ENCODE measurements at regions of chr13 and their contacts with region 1.

Region 1: DNA sequence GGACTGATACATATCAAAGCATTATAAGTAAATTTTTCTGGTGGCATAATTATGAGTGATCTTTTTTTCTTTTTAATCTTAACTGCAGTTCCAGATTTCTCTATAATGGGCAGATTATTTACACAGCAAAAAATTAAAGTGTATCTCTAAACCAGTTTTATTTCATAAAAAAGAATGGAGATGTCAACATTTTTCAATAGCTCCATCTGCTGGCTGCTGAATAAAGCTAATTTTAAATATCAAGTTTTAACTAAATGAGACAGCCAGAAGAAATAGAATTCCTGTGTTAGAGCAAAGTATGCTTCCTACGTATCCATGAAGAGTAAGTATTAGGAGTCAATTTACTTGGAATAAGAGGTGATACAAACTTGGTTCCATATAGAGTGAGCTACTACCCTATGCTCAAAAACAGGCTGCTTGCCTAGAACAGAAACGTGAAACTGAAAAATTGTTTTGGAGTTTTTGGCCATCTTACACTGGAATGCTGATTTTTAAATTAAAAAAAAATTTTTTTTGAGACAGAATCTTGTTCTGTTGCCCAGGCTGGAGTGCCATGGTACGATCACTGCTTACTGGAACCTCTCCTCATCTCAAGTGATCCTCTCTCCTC is 5.0 kb upstream of the PDS5B start:
- DNase-seq: no peak
- ATAC-seq: no peak
- H3K4me3 Mint-ChIP-seq: no peak overlapping the region
- H3K27ac Mint-ChIP-seq: no peak overlapping the region
- H3K4me1 Mint-ChIP-seq: peaks cover 9% of the 10 kb centered on the region
- H3K27me3 Mint-ChIP-seq: no peaks in the 10 kb centered on the region
- CTCF ChIP-seq: no peak

Region 2: GRCh38 chr13:32019612-32020233 is 561.6 kb before region 1 on chr13:
- CTCF ChIA-PET with region 1: no interaction called
- POLR2A ChIA-PET with region 1: no interaction called
- intact Hi-C with region 1: loop called (anchors 1 kb)
- DNase-seq: no peak
- ATAC-seq: peak; percentile 85
- H3K4me3 Mint-ChIP-seq: no peak overlapping the region
- H3K27ac Mint-ChIP-seq: no peak overlapping the region
- H3K4me1 Mint-ChIP-seq: no peaks in the 10 kb centered on the region
- H3K27me3 Mint-ChIP-seq: no peaks in the 10 kb centered on the region
- CTCF ChIP-seq: no peak

Region 3: GRCh38 chr13:32267836-32268439 is 313.3 kb before region 1 on chr13:
- CTCF ChIA-PET with region 1: interaction called, 3 read pairs
- POLR2A ChIA-PET with region 1: no interaction called
- intact Hi-C with region 1: loop called (anchors 1 kb)
- DNase-seq: peak; percentile 22
- ATAC-seq: peak; percentile 93
- H3K4me3 Mint-ChIP-seq: no peak overlapping the region
- H3K27ac Mint-ChIP-seq: no peak overlapping the region
- H3K4me1 Mint-ChIP-seq: no peaks in the 10 kb centered on the region
- H3K27me3 Mint-ChIP-seq: no peaks in the 10 kb centered on the region
- CTCF ChIP-seq: peak; percentile 67

Region 4: GRCh38 chr13:32381539-32381938 is 199.7 kb before region 1 on chr13:
- CTCF ChIA-PET with region 1: interaction called, 34 read pairs
- POLR2A ChIA-PET with region 1: no interaction called
- intact Hi-C with region 1: loop called (anchors 1 kb)
- DNase-seq: no peak
- ATAC-seq: peak; percentile 37
- H3K4me3 Mint-ChIP-seq: no peak overlapping the region
- H3K27ac Mint-ChIP-seq: no peak overlapping the region
- H3K4me1 Mint-ChIP-seq: no peaks in the 10 kb centered on the region
- H3K27me3 Mint-ChIP-seq: no peaks in the 10 kb centered on the region
- CTCF ChIP-seq: no peak

Region 5: GRCh38 chr13:32427852-32428580 is 153.3 kb before region 1 on chr13 and contains the start of gene N4BP2L1:
- CTCF ChIA-PET with region 1: interaction called, 4 read pairs
- POLR2A ChIA-PET with region 1: interaction called, 6 read pairs
- intact Hi-C with region 1: loop called (anchors 1 kb)
- DNase-seq: peak; percentile 77
- ATAC-seq: peak; percentile 73
- H3K4me3 Mint-ChIP-seq: peak within 1 kb of the TSS; percentile 95
- H3K27ac Mint-ChIP-seq: peak within 1 kb of the TSS; percentile 99
- H3K4me1 Mint-ChIP-seq: peaks cover 48% of the 10 kb centered on the region
- H3K27me3 Mint-ChIP-seq: no peaks in the 10 kb centered on the region
- CTCF ChIP-seq: no peak
- total RNA-seq, gene N4BP2L1: 23.0 and 24.3 TPM in 2 replicates

Region 6: GRCh38 chr13:32472194-32472621 is 109.1 kb before region 1 on chr13:
- CTCF ChIA-PET with region 1: interaction called, 11 read pairs
- POLR2A ChIA-PET with region 1: no interaction called
- intact Hi-C with region 1: loop called (anchors 1 kb)
- DNase-seq: no peak
- ATAC-seq: no peak
- H3K4me3 Mint-ChIP-seq: no peak overlapping the region
- H3K27ac Mint-ChIP-seq: no peak overlapping the region
- H3K4me1 Mint-ChIP-seq: no peaks in the 10 kb centered on the region
- H3K27me3 Mint-ChIP-seq: no peaks in the 10 kb centered on the region
- CTCF ChIP-seq: no peak

Measured in activated B cell treated with CpG ODN at 0.5 μM for 24 hours (primary cell).